GM12878 (cell line): ENCODE measurements at regions of chr6 and their contacts with region 1.

Region 1: GRCh38 chr6:593139-593906 is 63.6 kb downstream of the HUS1B start:
- DNase-seq: peak; percentile 13
- ATAC-seq: peak; percentile 85
- H3K4me3 ChIP-seq: no peak overlapping the region
- H3K27ac ChIP-seq: no peak overlapping the region
- H3K4me1 ChIP-seq: no peaks in the 10 kb centered on the region
- H3K27me3 ChIP-seq: no peaks in the 10 kb centered on the region
- CTCF ChIP-seq: peak; percentile 38 to 67 (median 42); a peak in 5 of 6 replicates
- EP300 ChIP-seq: no peak
- POLR2A ChIP-seq: no peak
- RAD21 ChIP-seq: peak; percentile 81

Region 2: DNA sequence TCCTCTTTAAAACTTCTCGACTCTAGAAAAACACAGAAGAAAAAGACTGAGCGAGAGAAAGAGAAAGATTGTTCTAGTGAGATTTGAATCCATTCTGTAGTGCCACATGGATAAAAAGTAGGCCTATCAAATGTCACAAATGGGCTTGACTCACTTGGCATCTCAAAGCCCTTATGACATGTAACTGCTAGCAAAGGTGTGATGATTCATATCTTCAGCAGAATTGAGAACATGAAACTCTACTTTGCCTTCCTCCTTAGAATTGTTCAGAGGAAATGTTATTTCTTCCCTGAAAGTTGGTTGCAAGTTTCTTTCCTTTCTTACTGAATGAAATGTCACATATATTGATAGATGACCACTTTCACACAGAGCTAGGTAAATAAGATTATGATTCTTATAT is 341.4 kb before region 1 on chr6:
- CTCF ChIA-PET with region 1: no interaction called
- POLR2A ChIA-PET with region 1: no interaction called
- RAD21 ChIA-PET with region 1: no interaction called
- SMC1A ChIA-PET with region 1: no interaction called
- in situ Hi-C with region 1: no loop called
- intact Hi-C with region 1: no loop called
- DNase-seq: peak; percentile 70
- ATAC-seq: peak; percentile 79
- H3K4me3 ChIP-seq: no peak overlapping the region
- H3K27ac ChIP-seq: peak overlapping the region; percentile 66
- H3K4me1 ChIP-seq: peaks cover 42% of the 10 kb centered on the region
- H3K27me3 ChIP-seq: no peaks in the 10 kb centered on the region
- CTCF ChIP-seq: no peak
- EP300 ChIP-seq: no peak
- POLR2A ChIP-seq: no peak
- RAD21 ChIP-seq: peak; percentile 17; the same call in 1 of the 2 replicates

Region 3: GRCh38 chr6:391559-392440 is 201.5 kb before region 1 on chr6 and contains the start of gene IRF4:
- CTCF ChIA-PET with region 1: interaction called, 4 read pairs
- POLR2A ChIA-PET with region 1: interaction called, 3 read pairs
- RAD21 ChIA-PET with region 1: interaction called, 13 read pairs
- SMC1A ChIA-PET with region 1: no interaction called
- in situ Hi-C with region 1: no loop called
- intact Hi-C with region 1: no loop called
- DNase-seq: no peak
- ATAC-seq: peak; percentile 63
- H3K4me3 ChIP-seq: peak within 1 kb of the TSS; percentile 95
- H3K27ac ChIP-seq: peak within 1 kb of the TSS; percentile 97
- H3K4me1 ChIP-seq: peaks cover 33% of the 10 kb centered on the region
- H3K27me3 ChIP-seq: no peaks in the 10 kb centered on the region
- CTCF ChIP-seq: no peak
- EP300 ChIP-seq: no peak
- POLR2A ChIP-seq: peak; percentile 77
- RAD21 ChIP-seq: peak; percentile 25; the same call in 1 of the 2 replicates
- polyA plus RNA-seq, gene IRF4: 50.0 to 98.9 TPM

Region 4: DNA sequence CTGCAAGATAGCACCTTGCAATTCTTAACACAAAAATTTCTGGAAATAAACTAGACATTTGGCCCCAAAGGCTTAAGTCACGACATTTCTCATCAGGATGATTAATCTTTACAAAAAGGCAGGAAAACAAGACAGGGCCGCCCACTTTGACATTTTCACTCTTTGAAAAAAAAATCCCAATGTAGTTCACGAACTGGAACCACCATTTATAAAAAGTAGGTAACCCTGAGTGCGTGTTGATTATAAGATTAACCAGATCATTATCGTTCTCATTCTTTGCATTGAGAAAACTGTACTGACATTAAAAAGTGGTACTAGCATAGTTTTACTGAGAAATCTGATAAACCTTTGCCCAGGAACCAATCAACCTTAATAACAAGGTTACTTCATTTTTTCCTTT is 45.2 kb before region 1 on chr6:
- CTCF ChIA-PET with region 1: no interaction called
- POLR2A ChIA-PET with region 1: no interaction called
- RAD21 ChIA-PET with region 1: no interaction called
- SMC1A ChIA-PET with region 1: no interaction called
- in situ Hi-C with region 1: no loop called
- intact Hi-C with region 1: no loop called
- DNase-seq: no peak
- ATAC-seq: no peak
- H3K4me3 ChIP-seq: no peak overlapping the region
- H3K27ac ChIP-seq: no peak overlapping the region
- H3K4me1 ChIP-seq: no peaks in the 10 kb centered on the region
- H3K27me3 ChIP-seq: no peaks in the 10 kb centered on the region
- CTCF ChIP-seq: no peak
- EP300 ChIP-seq: no peak
- POLR2A ChIP-seq: no peak
- RAD21 ChIP-seq: no peak

Region 5: DNA sequence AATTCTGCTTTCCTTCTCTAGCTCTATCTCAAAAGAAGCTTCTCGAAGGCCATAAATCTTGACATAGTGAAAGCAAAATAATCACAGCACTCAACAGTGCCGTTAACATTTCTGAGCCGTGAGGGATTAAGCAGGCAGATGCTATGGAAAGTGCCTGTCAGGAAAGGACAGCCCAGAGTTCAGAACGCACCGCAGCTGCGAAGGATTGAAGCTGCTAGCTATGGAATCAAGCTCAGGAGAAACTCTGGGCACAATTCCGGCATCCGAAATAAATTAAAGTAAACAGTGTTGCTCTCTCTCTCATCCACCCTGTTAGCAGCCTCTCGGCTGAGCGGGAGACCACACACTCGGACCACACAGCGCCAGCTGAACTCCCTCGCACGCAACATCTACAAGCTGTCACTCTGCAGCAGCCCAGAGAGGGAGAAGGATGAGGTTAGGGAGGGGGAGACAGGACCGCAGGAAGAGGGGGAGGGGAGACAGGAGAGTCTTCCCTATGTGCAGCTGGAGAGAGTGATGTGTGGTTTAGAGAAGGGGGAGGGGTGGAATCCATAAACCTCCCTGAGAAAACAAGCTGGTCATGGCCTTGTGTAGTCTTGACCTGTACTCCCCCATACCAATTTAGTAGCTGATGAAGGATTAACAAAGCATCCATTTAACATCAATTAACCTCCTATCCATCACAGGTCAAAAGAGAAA is 90.6 kb after region 1 on chr6:
- CTCF ChIA-PET with region 1: interaction called, 8 read pairs
- POLR2A ChIA-PET with region 1: no interaction called
- RAD21 ChIA-PET with region 1: interaction called, 4 read pairs
- SMC1A ChIA-PET with region 1: interaction called, 17 read pairs
- in situ Hi-C with region 1: no loop called
- intact Hi-C with region 1: no loop called
- DNase-seq: no peak
- ATAC-seq: no peak
- H3K4me3 ChIP-seq: peak overlapping the region; percentile 59
- H3K27ac ChIP-seq: peak overlapping the region; percentile 5
- H3K4me1 ChIP-seq: peaks cover 12% of the 10 kb centered on the region
- H3K27me3 ChIP-seq: no peaks in the 10 kb centered on the region
- CTCF ChIP-seq: no peak
- EP300 ChIP-seq: no peak
- POLR2A ChIP-seq: no peak
- RAD21 ChIP-seq: no peak

Region 6: GRCh38 chr6:786946-787763 is 193.8 kb after region 1 on chr6:
- CTCF ChIA-PET with region 1: interaction called, 10 read pairs
- POLR2A ChIA-PET with region 1: no interaction called
- RAD21 ChIA-PET with region 1: no interaction called
- SMC1A ChIA-PET with region 1: interaction called, 13 read pairs
- in situ Hi-C with region 1: loop called (anchors 5 kb)
- intact Hi-C with region 1: loop called (anchors 1 kb)
- DNase-seq: no peak
- ATAC-seq: peak; percentile 70
- H3K4me3 ChIP-seq: no peak overlapping the region
- H3K27ac ChIP-seq: no peak overlapping the region
- H3K4me1 ChIP-seq: no peaks in the 10 kb centered on the region
- H3K27me3 ChIP-seq: no peaks in the 10 kb centered on the region
- CTCF ChIP-seq: peak; percentile 50 to 75 (median 71); a peak in 5 of 6 replicates
- EP300 ChIP-seq: no peak
- POLR2A ChIP-seq: no peak
- RAD21 ChIP-seq: peak; percentile 68

Region 7: DNA sequence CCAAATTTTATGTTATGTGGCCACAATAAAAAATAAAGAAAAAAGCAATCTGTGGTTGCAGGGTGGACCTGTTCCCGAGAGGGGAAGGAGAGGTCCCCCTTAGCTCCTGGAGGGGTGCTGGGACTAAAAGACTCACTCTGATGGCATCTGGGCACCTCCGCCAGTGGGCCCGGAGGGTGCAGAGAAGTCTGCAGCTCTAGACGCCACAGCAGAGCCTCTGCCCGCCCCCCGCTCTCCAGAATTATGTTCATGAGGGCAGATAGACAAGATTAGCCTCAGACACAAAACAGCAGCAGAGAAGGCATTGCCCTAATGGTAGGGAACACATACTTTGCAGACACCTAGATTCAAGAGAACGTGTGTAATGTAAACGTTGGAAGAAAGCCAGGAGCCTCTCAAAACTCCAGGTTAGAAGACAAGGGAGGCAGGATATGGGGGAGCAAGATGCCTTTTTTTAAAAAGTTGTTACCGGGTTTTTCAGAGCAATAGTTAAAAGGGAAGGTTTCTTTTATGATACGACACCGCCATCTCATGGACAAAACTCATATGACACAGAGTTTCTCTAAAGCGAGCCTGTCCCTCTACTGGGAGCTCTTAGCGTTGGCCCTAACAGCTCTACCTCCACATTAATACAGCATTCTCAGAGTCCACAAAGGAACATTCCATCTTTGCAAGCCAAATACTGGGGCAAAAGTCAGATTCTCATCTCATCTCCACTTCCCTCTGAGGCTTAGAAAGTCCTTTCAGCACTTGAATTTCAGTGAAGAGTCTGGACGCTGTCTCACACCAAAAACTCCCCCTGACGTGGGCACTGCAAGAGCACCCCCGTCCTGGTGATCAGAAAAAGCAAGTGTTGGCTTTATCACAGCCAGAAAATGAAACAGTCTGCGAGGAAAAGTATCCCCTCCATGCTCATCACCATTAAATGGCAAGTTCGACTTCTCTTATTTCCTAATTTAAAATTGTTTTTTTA is 843.3 kb after region 1 on chr6:
- CTCF ChIA-PET with region 1: interaction called, 22 read pairs
- POLR2A ChIA-PET with region 1: no interaction called
- RAD21 ChIA-PET with region 1: interaction called, 7 read pairs
- SMC1A ChIA-PET with region 1: interaction called, 6 read pairs
- in situ Hi-C with region 1: no loop called
- intact Hi-C with region 1: loop called (anchors 10 kb)
- DNase-seq: peak; percentile 30
- ATAC-seq: peak; percentile 92
- H3K4me3 ChIP-seq: no peak overlapping the region
- H3K27ac ChIP-seq: no peak overlapping the region
- H3K4me1 ChIP-seq: no peaks in the 10 kb centered on the region
- H3K27me3 ChIP-seq: peaks cover 0 to 3% of the 10 kb centered on the region in 2 experiments; a peak in 3 of 4 replicates
- CTCF ChIP-seq: peak; percentile 57 to 82 (median 68); a peak in 5 of 6 replicates
- EP300 ChIP-seq: no peak
- POLR2A ChIP-seq: no peak
- RAD21 ChIP-seq: peak; percentile 78